HepG2 (cell line): ENCODE measurements at regions of chr2 and their contacts with region 1.

Region 1: GRCh38 chr2:119659601-119660342 is 19.2 kb upstream of the TMEM177 start:
- DNase-seq: peak; percentile 49
- ATAC-seq: peak; percentile 86
- H3K4me3 ChIP-seq: no peak overlapping the region
- H3K27ac ChIP-seq: no peak overlapping the region
- H3K4me1 ChIP-seq: no peaks in the 10 kb centered on the region
- H3K27me3 ChIP-seq: peaks cover 0 to 11% of the 10 kb centered on the region in 2 experiments; a peak in 4 of 5 replicates
- CTCF ChIP-seq: peak; percentile 89
- EP300 ChIP-seq: no peak
- POLR2A ChIP-seq: no peak
- RAD21 ChIP-seq: peak; percentile 38; the same call in 1 of the 2 replicates

Region 2: GRCh38 chr2:119126650-119127049 is 533.1 kb before region 1 on chr2:
- CTCF ChIA-PET with region 1: no interaction called
- POLR2A ChIA-PET with region 1: no interaction called
- in situ Hi-C with region 1: no loop called
- intact Hi-C with region 1: no loop called
- DNase-seq: peak; percentile 26
- ATAC-seq: peak; percentile 83
- H3K4me3 ChIP-seq: no peak overlapping the region
- H3K27ac ChIP-seq: no peak overlapping the region
- H3K4me1 ChIP-seq: no peaks in the 10 kb centered on the region
- H3K27me3 ChIP-seq: peaks cover 4 to 42% of the 10 kb centered on the region in 2 experiments; a peak in 3 of 5 replicates
- CTCF ChIP-seq: peak; percentile 80
- EP300 ChIP-seq: no peak
- POLR2A ChIP-seq: no peak
- RAD21 ChIP-seq: peak; percentile 40; the same call in 1 of the 2 replicates

Region 3: GRCh38 chr2:119517433-119517832 is 142.3 kb before region 1 on chr2:
- CTCF ChIA-PET with region 1: interaction called, 12 read pairs
- POLR2A ChIA-PET with region 1: no interaction called
- in situ Hi-C with region 1: no loop called
- intact Hi-C with region 1: no loop called
- DNase-seq: peak; percentile 54
- ATAC-seq: peak; percentile 97
- H3K4me3 ChIP-seq: no peak overlapping the region
- H3K27ac ChIP-seq: no peak overlapping the region
- H3K4me1 ChIP-seq: no peaks in the 10 kb centered on the region
- H3K27me3 ChIP-seq: peaks cover 0 to 25% of the 10 kb centered on the region in 2 experiments; a peak in 3 of 5 replicates
- CTCF ChIP-seq: peak; percentile 86
- EP300 ChIP-seq: no peak
- POLR2A ChIP-seq: no peak
- RAD21 ChIP-seq: peak; percentile 64; the same call in 1 of the 2 replicates

Region 4: DNA sequence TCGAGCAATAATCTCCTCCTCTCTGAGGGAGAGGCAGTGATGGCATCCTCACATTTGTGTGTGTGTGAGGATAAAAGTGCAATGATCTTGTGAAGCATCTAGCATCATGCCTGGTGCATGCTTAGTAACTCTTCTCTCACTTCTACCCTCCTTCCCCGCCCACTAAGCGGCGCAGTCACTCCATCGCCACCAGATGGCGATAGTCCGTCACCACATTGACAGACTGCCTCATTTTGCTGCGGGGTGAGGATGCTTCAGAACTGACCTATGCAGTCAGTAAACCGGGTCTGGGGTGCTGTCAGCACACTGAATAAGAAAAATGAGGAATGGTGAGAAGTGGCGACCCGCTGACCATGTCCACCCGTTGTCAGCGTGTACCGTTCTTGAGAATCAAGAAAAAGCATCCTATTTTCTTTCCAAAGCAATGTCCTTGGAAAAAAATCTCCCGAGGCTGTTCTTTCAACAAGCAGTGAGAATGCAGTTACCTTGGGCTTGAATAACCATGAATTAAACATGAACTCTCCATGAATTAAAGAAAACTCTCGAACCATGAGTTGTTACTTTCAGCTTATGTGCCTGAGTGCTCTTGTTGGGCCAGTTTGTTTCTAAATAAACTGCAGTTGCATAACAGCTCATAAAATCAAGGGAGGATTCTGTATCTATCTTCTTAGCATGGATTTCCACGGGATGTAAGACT is 18.1 kb before region 1 on chr2:
- CTCF ChIA-PET with region 1: interaction called, 39 read pairs
- POLR2A ChIA-PET with region 1: no interaction called
- in situ Hi-C with region 1: no loop called
- intact Hi-C with region 1: loop called (anchors 1 kb)
- DNase-seq: peak; percentile 70
- ATAC-seq: peak; percentile 95
- H3K4me3 ChIP-seq: no peak overlapping the region
- H3K27ac ChIP-seq: no peak overlapping the region
- H3K4me1 ChIP-seq: peaks cover 10% of the 10 kb centered on the region; the same call in 1 of the 2 replicates
- H3K27me3 ChIP-seq: peaks cover 2 to 36% of the 10 kb centered on the region in 2 experiments; a peak in 4 of 5 replicates
- CTCF ChIP-seq: peak; percentile 98
- EP300 ChIP-seq: no peak
- POLR2A ChIP-seq: no peak
- RAD21 ChIP-seq: peak; percentile 71